A549 (cell line): ENCODE measurements at regions of chr1 and their contacts with region 1.

Region 1: GRCh38 chr1:26145041-26145959 is 13.6 kb upstream of the FAM110D start:
- DNase-seq: peak; percentile 67 to 80
- ATAC-seq: peak; percentile 91 to 99
- H3K4me3 ChIP-seq: no peak overlapping the region
- H3K27ac ChIP-seq: no peak overlapping the region
- H3K4me1 ChIP-seq: no peaks in the 10 kb centered on the region
- CTCF ChIP-seq: peak; percentile 71
- EP300 ChIP-seq: no peak
- POLR2A ChIP-seq: no peak
- RAD21 ChIP-seq: peak; percentile 82 to 83

Region 2: GRCh38 chr1:26035959-26036755 is 109.1 kb before region 1 on chr1:
- CTCF ChIA-PET with region 1: interaction called, 29 read pairs
- POLR2A ChIA-PET with region 1: no interaction called
- DNase-seq: peak; percentile 55 to 78
- ATAC-seq: peak; percentile 75 to 93
- H3K4me3 ChIP-seq: peak overlapping the region; percentile 70
- H3K27ac ChIP-seq: peak overlapping the region; percentile 72 to 87
- H3K4me1 ChIP-seq: peaks cover 11% of the 10 kb centered on the region
- CTCF ChIP-seq: peak; percentile 81
- EP300 ChIP-seq: no peak
- POLR2A ChIP-seq: no peak
- RAD21 ChIP-seq: peak; percentile 79 to 85

Region 3: GRCh38 chr1:26112407-26112775 is 32.9 kb before region 1 on chr1:
- CTCF ChIA-PET with region 1: interaction called, 143 read pairs
- POLR2A ChIA-PET with region 1: interaction called, 8 read pairs
- DNase-seq: no peak
- ATAC-seq: peak; percentile 10 to 40; a peak in 4 of 6 replicates
- H3K4me3 ChIP-seq: peak overlapping the region; percentile 86
- H3K27ac ChIP-seq: peak overlapping the region; percentile 87 to 99
- H3K4me1 ChIP-seq: peaks cover 6% of the 10 kb centered on the region
- CTCF ChIP-seq: no peak
- EP300 ChIP-seq: no peak
- POLR2A ChIP-seq: no peak
- RAD21 ChIP-seq: no peak

Region 4: DNA sequence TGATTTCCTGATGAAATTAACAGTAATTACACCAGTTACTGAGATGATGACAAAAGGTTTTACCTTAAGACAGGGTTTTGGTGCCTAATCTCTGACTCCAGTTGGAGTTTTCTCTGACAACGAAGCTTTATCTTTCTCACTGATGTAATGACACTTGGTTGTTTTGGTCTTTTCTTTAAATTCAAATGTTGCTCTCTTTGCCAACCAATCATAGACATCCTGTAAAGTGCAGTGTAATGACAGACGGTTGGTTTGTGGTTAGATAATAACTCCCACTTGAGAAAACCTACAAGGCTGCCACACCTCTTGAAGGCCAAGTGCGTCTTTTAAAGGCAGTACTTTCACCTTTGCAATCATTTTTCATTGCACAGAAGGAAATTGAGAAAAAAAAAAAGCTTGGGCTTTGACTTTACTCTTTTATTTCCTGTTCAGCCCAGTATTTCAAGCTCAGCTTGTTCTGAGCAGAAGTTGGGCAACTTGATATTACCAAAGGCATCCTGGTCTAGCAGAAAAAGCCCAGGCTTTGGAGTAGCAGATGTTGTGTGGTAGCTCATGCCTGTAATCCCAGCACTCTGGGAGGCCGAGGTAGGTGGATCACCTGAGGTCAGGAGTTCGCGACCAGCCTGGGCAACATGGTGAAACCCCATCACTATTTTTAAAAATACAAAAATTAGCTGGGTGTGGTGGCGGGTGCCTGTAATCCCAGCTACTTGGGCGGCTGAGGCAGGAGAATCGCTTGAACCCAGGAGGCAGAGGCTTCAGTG is 18.8 kb before region 1 on chr1:
- CTCF ChIA-PET with region 1: interaction called, 46 read pairs
- POLR2A ChIA-PET with region 1: interaction called, 8 read pairs
- DNase-seq: peak in 1 of 2 experiments; percentile 25
- ATAC-seq: no peak
- H3K4me3 ChIP-seq: no peak overlapping the region
- H3K27ac ChIP-seq: no peak overlapping the region
- H3K4me1 ChIP-seq: peaks cover 39% of the 10 kb centered on the region
- CTCF ChIP-seq: no peak
- EP300 ChIP-seq: no peak
- POLR2A ChIP-seq: no peak
- RAD21 ChIP-seq: no peak

Region 5: GRCh38 chr1:26161415-26162219 is 16.3 kb after region 1 on chr1:
- CTCF ChIA-PET with region 1: interaction called, 54 read pairs
- POLR2A ChIA-PET with region 1: no interaction called
- DNase-seq: peak; percentile 26 to 36
- ATAC-seq: peak; percentile 56 to 60
- H3K4me3 ChIP-seq: peak overlapping the region; percentile 46
- H3K27ac ChIP-seq: peak overlapping the region; percentile 60 to 87
- H3K4me1 ChIP-seq: peaks cover 10% of the 10 kb centered on the region; the same call in 2 of the 3 replicates
- CTCF ChIP-seq: peak; percentile 37
- EP300 ChIP-seq: no peak
- POLR2A ChIP-seq: no peak
- RAD21 ChIP-seq: no peak; a peak in 1 of 5 replicates

Region 6: DNA sequence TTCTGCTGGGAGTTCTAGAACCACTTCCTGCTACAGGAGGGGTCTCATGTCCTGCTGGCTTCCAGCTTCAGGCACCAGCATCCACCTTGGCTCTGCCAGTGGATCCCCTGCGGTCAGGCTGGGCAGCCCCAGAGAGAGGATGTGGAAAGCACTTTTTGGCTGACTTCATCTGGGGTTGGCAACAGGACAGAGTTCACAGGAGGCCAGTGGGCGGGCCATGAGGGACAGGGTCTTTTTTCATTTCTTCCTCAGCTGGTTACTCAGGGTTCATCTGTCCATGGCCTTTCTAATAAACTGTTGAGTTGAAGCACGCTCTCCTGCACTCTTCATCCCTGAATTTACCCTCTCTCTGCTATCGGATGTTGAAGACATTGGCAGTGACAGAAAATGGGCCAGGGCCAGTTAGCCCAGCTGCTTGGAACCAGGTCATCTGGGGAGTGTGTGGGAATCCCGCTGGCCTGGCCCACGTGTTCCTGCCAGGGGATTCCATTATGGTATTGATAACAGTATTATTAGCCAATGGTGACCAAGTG is 429.5 kb after region 1 on chr1:
- CTCF ChIA-PET with region 1: no interaction called
- POLR2A ChIA-PET with region 1: no interaction called
- DNase-seq: no peak
- ATAC-seq: no peak
- H3K4me3 ChIP-seq: no peak overlapping the region
- H3K27ac ChIP-seq: no peak overlapping the region
- H3K4me1 ChIP-seq: no peaks in the 10 kb centered on the region
- CTCF ChIP-seq: no peak
- EP300 ChIP-seq: no peak
- POLR2A ChIP-seq: no peak
- RAD21 ChIP-seq: no peak